ENCODE measurements at regions of chr6 and their contacts with region 1.

Region 1: GRCh38 chr6:14129575-14129974 is 12.0 kb downstream of the CD83 start:
- DNase-seq: peak; percentile 55
- ATAC-seq: peak; percentile 97
- H3K4me3 Mint-ChIP-seq: no peak overlapping the region
- H3K27ac Mint-ChIP-seq: no peak overlapping the region
- H3K4me1 Mint-ChIP-seq: peaks cover 30% of the 10 kb centered on the region
- H3K27me3 Mint-ChIP-seq: no peaks in the 10 kb centered on the region; the same call in 1 of the 2 replicates
- CTCF ChIP-seq: no peak

Region 2: GRCh38 chr6:13924146-13924948 is 205.2 kb before region 1 on chr6:
- CTCF ChIA-PET with region 1: no interaction called
- POLR2A ChIA-PET with region 1: no interaction called
- DNase-seq: peak; percentile 71
- ATAC-seq: peak; percentile 82
- H3K4me3 Mint-ChIP-seq: peak overlapping the region; percentile 86
- H3K27ac Mint-ChIP-seq: peak overlapping the region; percentile 53
- H3K4me1 Mint-ChIP-seq: peaks cover 43% of the 10 kb centered on the region
- H3K27me3 Mint-ChIP-seq: peaks cover 40% of the 10 kb centered on the region
- CTCF ChIP-seq: no peak

Region 3: DNA sequence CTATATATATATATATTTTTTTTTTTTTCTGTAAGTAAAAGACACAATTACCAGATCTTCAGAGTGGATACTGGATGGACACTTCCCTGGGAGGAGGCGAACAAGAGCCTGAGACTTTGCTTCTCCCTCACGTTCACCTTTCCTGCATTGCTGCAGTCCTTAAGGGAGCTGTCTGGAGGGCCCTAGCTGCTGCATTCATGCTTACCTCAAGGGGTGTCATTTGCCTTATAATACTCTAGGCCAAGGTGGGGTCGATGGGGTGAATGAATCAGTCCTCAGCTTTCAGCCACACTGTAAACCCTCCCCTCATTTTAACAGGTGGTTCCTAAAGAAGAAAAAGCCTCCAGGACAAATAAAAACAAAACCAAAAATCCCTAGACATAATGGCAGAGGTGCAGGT is 46.8 kb before region 1 on chr6:
- CTCF ChIA-PET with region 1: interaction called, 10 read pairs
- POLR2A ChIA-PET with region 1: no interaction called
- DNase-seq: no peak
- ATAC-seq: peak; percentile 95
- H3K4me3 Mint-ChIP-seq: no peak overlapping the region
- H3K27ac Mint-ChIP-seq: no peak overlapping the region
- H3K4me1 Mint-ChIP-seq: peaks cover 14% of the 10 kb centered on the region
- H3K27me3 Mint-ChIP-seq: no peaks in the 10 kb centered on the region; the same call in 1 of the 2 replicates
- CTCF ChIP-seq: no peak

Region 4: GRCh38 chr6:14102383-14102782 is 27.2 kb before region 1 on chr6:
- CTCF ChIA-PET with region 1: no interaction called
- POLR2A ChIA-PET with region 1: no interaction called
- DNase-seq: no peak
- ATAC-seq: no peak
- H3K4me3 Mint-ChIP-seq: no peak overlapping the region
- H3K27ac Mint-ChIP-seq: no peak overlapping the region
- H3K4me1 Mint-ChIP-seq: no peaks in the 10 kb centered on the region
- H3K27me3 Mint-ChIP-seq: peaks cover 6% of the 10 kb centered on the region
- CTCF ChIP-seq: no peak

Region 5: GRCh38 chr6:14144678-14145113 is 15.1 kb after region 1 on chr6:
- CTCF ChIA-PET with region 1: interaction called, 42 read pairs
- POLR2A ChIA-PET with region 1: no interaction called
- DNase-seq: peak; percentile 92
- ATAC-seq: peak; percentile 91
- H3K4me3 Mint-ChIP-seq: no peak overlapping the region
- H3K27ac Mint-ChIP-seq: no peak overlapping the region
- H3K4me1 Mint-ChIP-seq: peaks cover 40% of the 10 kb centered on the region
- H3K27me3 Mint-ChIP-seq: peaks cover 5% of the 10 kb centered on the region; the same call in 1 of the 2 replicates
- CTCF ChIP-seq: peak; percentile 94

Region 6: GRCh38 chr6:14210663-14211561 is 81.3 kb after region 1 on chr6:
- CTCF ChIA-PET with region 1: interaction called, 17 read pairs
- POLR2A ChIA-PET with region 1: no interaction called
- DNase-seq: peak; percentile 88
- ATAC-seq: peak; percentile 87
- H3K4me3 Mint-ChIP-seq: peak overlapping the region; percentile 62
- H3K27ac Mint-ChIP-seq: no peak overlapping the region
- H3K4me1 Mint-ChIP-seq: peaks cover 28% of the 10 kb centered on the region
- H3K27me3 Mint-ChIP-seq: peaks cover 28% of the 10 kb centered on the region
- CTCF ChIP-seq: peak; percentile 68

Region 7: GRCh38 chr6:14231546-14232280 is 102.1 kb after region 1 on chr6:
- CTCF ChIA-PET with region 1: no interaction called
- POLR2A ChIA-PET with region 1: no interaction called
- DNase-seq: no peak
- ATAC-seq: no peak
- H3K4me3 Mint-ChIP-seq: no peak overlapping the region
- H3K27ac Mint-ChIP-seq: no peak overlapping the region
- H3K4me1 Mint-ChIP-seq: peaks cover 8% of the 10 kb centered on the region
- H3K27me3 Mint-ChIP-seq: peaks cover 16% of the 10 kb centered on the region
- CTCF ChIP-seq: no peak